ENCODE measurements at regions of chr5 and their contacts with region 1.

Region 1: GRCh38 chr5:37005946-37006540 is 129.5 kb downstream of the NIPBL start:
- DNase-seq: no peak
- H3K4me3 ChIP-seq: no peak overlapping the region
- H3K27ac ChIP-seq: no peak overlapping the region
- H3K4me1 ChIP-seq: no peaks in the 10 kb centered on the region
- H3K27me3 ChIP-seq: no peaks in the 10 kb centered on the region
- CTCF ChIP-seq: peak; percentile 39 to 64 (median 52)
- EP300 ChIP-seq: no peak
- POLR2A ChIP-seq: no peak

Region 2: DNA sequence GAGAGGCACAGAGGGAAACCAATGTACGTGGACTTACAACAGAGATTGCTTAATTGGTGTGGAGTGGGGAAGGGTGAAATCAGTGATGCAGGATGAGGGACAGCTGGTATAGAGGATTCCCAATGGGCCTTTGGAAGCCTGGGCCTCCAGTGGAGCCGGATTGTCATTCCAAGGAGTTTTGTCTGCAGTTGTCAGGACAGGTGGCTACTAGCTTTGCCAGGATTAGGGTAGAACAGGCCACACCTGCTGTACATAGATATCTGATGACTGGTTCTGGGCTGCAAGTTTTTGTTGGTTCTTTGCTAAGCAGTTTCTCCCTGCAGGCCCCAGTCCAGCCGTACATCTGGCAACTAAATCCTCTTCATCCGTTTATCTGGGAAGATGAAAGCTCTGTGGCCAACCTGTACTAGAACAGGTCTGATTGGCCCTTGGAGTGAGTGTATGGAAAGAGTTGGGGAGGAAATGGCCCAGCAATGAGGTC is 849.9 kb before region 1 on chr5:
- in situ Hi-C with region 1: no loop called
- intact Hi-C with region 1: no loop called
- DNase-seq: no peak
- H3K4me3 ChIP-seq: no peak overlapping the region
- H3K27ac ChIP-seq: no peak overlapping the region
- H3K4me1 ChIP-seq: peaks cover 3 to 16% (median 11%) of the 10 kb centered on the region in 4 donors
- H3K27me3 ChIP-seq: no peaks in the 10 kb centered on the region
- CTCF ChIP-seq: no peak
- EP300 ChIP-seq: no peak
- POLR2A ChIP-seq: no peak

Region 3: DNA sequence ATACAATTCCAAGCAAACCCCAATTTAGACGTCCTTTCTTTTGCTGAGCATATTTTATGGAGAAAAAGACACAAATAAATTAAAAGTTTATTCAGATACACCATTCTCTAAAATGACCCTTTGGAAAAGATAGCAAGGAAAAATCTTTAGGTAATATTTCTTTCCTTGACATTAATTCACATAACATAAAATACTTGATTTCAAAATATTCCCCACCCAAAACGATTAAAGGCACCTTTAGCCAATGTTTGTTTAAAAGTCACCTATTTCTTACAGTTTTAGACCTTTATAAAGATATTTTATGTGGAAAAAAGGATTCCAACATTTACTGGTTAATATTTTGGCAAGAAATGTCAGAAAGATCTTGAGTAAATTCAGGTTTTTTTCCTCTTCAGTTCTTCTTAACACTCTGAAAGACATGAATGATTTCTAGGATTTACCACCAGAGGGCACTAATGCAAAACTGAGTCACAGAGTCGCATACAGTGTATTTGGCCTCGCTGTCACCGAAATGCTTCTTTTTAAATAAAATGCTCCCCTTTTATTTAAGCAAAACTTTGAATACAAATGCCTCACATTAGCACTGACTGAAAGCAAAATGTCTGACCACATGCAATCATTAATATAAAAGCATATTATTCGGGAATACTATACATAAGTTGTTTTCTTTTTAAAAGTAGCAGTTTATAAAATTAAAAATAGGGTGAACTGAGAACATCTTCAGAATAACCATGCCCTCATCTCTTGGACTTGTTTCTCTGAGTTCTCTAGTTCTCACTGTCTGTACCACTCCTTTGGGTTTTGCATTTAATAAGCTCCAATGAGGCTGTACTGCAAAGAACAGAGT is 277.1 kb before region 1 on chr5:
- in situ Hi-C with region 1: loop called in 3 of 4 experiments (anchors 10 to 25 kb)
- intact Hi-C with region 1: loop called (anchors 10 kb)
- DNase-seq: no peak
- H3K4me3 ChIP-seq: no peak overlapping the region
- H3K27ac ChIP-seq: no peak overlapping the region
- H3K4me1 ChIP-seq: no peaks in the 10 kb centered on the region
- H3K27me3 ChIP-seq: no peaks in the 10 kb centered on the region
- CTCF ChIP-seq: peak; percentile 55 to 70 (median 64)
- EP300 ChIP-seq: no peak
- POLR2A ChIP-seq: no peak

Region 4: DNA sequence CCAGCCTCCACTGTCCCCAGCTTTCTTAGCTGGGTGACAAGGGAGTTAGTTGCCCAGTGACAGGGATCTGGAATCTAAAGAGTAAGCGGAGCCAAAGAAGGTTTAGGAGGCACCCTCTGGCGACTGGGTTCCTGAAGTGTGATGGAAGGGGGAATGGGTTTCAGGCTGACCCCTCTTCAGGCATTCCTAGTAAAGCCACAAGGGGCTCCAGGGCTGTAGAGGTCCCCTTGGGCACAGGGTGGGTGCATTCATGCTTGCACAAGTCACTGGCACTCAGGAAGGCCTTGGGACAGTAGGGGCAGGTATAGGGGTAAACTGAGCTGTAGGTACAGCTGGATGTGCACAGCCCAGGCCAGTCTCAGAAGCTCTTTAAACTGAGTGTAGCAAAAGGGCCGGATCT is 168.9 kb after region 1 on chr5:
- in situ Hi-C with region 1: no loop called
- intact Hi-C with region 1: no loop called
- DNase-seq: no peak
- H3K4me3 ChIP-seq: no peak overlapping the region
- H3K27ac ChIP-seq: no peak overlapping the region
- H3K4me1 ChIP-seq: no peaks in the 10 kb centered on the region
- H3K27me3 ChIP-seq: no peaks in the 10 kb centered on the region
- CTCF ChIP-seq: no peak
- EP300 ChIP-seq: no peak
- POLR2A ChIP-seq: no peak

Region 5: GRCh38 chr5:38483788-38484398 is 1477.8 kb after region 1 on chr5:
- in situ Hi-C with region 1: no loop called
- intact Hi-C with region 1: no loop called
- DNase-seq: no peak
- H3K4me3 ChIP-seq: no peak overlapping the region
- H3K27ac ChIP-seq: no peak overlapping the region
- H3K4me1 ChIP-seq: no peaks in the 10 kb centered on the region
- H3K27me3 ChIP-seq: no peaks in the 10 kb centered on the region
- CTCF ChIP-seq: no peak
- EP300 ChIP-seq: no peak
- POLR2A ChIP-seq: no peak